HepG2 (cell line): ENCODE measurements at regions of chr13 and their contacts with region 1.

Region 1: GRCh38 chr13:36163809-36164308 is 32.7 kb upstream of the DCLK1 start:
- DNase-seq: no peak
- ATAC-seq: no peak
- H3K4me3 ChIP-seq: no peak overlapping the region
- H3K27ac ChIP-seq: no peak overlapping the region
- H3K4me1 ChIP-seq: no peaks in the 10 kb centered on the region
- H3K27me3 ChIP-seq: no peaks in the 10 kb centered on the region
- CTCF ChIP-seq: no peak
- EP300 ChIP-seq: no peak
- POLR2A ChIP-seq: no peak
- RAD21 ChIP-seq: no peak

Region 2: GRCh38 chr13:36190771-36191170 is 26.9 kb after region 1 on chr13:
- CTCF ChIA-PET with region 1: no interaction called
- POLR2A ChIA-PET with region 1: no interaction called
- in situ Hi-C with region 1: no loop called
- intact Hi-C with region 1: loop called (anchors 1 kb)
- DNase-seq: no peak
- ATAC-seq: no peak
- H3K4me3 ChIP-seq: no peak overlapping the region
- H3K27ac ChIP-seq: no peak overlapping the region
- H3K4me1 ChIP-seq: no peaks in the 10 kb centered on the region
- H3K27me3 ChIP-seq: no peaks in the 10 kb centered on the region; a peak in 1 of 5 replicates
- CTCF ChIP-seq: no peak
- EP300 ChIP-seq: no peak
- POLR2A ChIP-seq: no peak
- RAD21 ChIP-seq: no peak

Region 3: DNA sequence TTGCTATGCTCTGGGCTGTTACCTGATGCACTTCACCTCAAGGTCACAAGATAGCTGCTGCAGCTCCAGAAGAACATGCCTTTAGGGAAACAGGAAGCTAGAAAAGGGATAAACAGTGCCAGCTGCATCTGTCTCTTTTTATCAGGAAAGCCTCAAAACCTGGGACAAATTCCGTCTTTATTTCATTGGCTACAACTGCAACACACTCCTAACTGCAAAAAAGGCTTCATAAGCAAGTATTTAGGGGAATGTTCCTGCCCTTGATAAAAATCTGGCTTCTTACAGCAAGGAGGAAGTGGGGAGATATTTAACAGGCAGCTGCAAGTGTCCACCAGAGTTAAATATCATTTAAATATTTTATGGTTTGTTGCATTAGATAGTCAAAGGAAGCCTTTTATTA is 475.8 kb after region 1 on chr13:
- CTCF ChIA-PET with region 1: no interaction called
- POLR2A ChIA-PET with region 1: no interaction called
- in situ Hi-C with region 1: no loop called
- intact Hi-C with region 1: no loop called
- DNase-seq: no peak
- ATAC-seq: no peak
- H3K4me3 ChIP-seq: no peak overlapping the region
- H3K27ac ChIP-seq: no peak overlapping the region
- H3K4me1 ChIP-seq: no peaks in the 10 kb centered on the region
- H3K27me3 ChIP-seq: no peaks in the 10 kb centered on the region
- CTCF ChIP-seq: no peak
- EP300 ChIP-seq: no peak
- POLR2A ChIP-seq: no peak
- RAD21 ChIP-seq: no peak